ENCODE measurements at regions of chr10 and their contacts with region 1.

Region 1: GRCh38 chr10:88386821-88387773 is 196.0 kb downstream of the RNLS start:
- DNase-seq: peak; percentile 53
- CTCF ChIP-seq: no peak

Region 2: GRCh38 chr10:87861953-87862678 is 525.0 kb before region 1 on chr10:
- in situ Hi-C with region 1: loop called (anchors 5 kb)
- DNase-seq: peak; percentile 91
- CTCF ChIP-seq: no peak

Region 3: DNA sequence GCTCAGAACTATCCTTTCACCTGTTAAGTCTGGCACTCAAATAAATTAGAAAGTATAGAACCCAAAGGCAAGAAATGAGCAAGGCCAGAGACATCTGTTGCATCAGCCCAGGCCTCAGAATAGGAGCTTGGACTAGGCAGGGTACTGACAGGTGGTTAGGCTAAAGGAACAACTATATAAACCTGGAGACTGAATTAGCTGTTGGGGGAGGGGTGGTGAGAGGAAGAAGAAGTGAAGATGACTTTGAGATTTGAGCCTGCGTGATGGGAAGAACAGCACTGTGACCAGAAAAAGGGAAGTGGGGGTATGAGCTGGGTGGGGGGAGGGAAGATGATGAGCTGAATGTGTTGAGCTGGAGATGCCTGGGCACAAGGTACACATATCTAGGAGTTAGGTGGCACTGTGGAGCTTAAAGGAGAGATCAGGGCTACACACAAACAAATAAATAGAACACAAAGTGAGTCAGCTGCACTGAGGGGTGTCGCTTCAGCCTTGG is 278.9 kb before region 1 on chr10:
- in situ Hi-C with region 1: loop called (anchors 10 kb)
- DNase-seq: no peak
- CTCF ChIP-seq: peak; percentile 31

Region 4: GRCh38 chr10:88120599-88121333 is 266.3 kb before region 1 on chr10:
- in situ Hi-C with region 1: no loop called
- DNase-seq: no peak
- CTCF ChIP-seq: no peak

Region 5: DNA sequence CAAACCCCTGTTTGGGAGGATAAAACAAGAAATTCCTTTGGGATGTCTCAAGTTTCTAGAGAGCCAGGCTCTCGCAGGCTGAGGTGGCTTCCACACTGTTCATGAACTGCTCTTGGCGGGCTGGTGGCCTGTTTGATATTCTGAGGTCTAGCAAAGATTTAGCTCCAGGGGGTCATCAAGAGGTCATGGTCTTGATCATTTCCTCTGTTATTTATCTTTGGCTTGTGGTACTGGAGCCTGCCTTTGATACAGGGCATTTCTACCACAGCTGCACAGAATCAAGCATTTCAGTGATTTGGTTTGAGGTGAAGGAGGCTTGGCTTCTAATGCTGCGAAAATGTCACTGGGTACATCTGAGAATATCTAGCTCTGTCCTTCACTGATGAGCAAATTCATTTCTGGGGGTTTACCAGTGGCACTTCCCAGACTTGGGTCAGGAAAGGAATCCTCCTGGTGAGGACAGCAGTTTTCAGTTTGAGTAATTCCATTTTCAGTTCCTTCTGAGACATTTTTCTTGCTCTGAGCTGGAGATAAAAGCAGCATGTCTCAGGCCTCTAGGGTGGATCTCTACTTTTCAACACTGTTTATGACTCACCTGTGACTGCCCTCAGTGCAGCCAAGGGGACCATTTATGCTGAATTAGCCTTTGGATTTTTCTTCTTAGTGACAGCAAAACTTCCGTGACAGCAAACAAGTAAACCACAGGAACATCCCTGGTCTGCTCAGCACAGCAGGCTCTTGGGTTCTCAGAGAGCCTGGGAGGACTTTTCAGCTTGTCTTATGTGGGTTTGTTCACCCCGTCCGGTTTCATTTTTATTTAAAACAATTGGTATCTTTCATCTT is 116.0 kb before region 1 on chr10:
- in situ Hi-C with region 1: loop called (anchors 5 kb)
- DNase-seq: peak; percentile 43
- CTCF ChIP-seq: no peak

Measured in GM13977 (cell line).